Left lung (tissue), 14 donors: ENCODE measurements at regions of chrX and their contacts with region 1.

Region 1: GRCh38 chrX:110146521-110146920 is 143.6 kb downstream of the TMEM164 start:
- DNase-seq: peak in 2 of 4 donors; percentile 28 to 55
- ATAC-seq: peak; percentile 82
- H3K4me3 ChIP-seq: no peak overlapping the region
- H3K27ac ChIP-seq: no peak overlapping the region
- H3K4me1 ChIP-seq: peaks cover 0 to 19% of the 10 kb centered on the region in 2 donors
- H3K27me3 ChIP-seq: no peaks in the 10 kb centered on the region
- CTCF ChIP-seq: peak; percentile 60 to 63

Region 2: DNA sequence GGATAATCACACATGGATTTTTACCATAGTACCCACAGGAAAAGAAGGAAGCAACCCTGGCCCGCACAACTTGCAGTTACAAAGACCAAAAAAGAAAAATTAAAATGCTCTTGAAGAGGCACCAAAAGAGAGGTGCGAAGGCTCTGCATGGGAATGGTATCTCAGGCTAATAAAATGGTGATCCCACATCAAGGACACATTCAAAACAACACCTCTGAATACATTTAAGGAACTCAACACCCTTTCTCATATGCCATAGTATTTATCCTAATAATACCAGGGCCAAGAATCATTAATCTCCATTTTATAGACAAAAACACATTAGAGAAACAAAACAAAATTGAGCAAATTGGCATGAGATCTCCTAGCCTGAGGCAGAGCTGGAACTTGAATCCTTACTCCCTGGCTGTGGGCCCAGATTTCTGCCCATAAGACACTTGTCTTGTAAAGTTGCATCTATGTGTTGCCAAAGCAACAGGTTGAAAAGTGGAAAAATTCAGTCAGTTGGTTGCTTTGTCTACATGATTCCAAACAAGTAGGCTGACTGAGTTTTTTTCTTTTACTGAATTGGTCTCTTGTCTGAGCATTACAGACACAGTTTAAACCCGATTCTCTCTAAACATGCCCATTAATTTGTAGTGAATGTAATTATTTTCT is 698.1 kb before region 1 on chrX:
- intact Hi-C with region 1: no loop called
- DNase-seq: peak in 1 of 4 donors; percentile 1
- ATAC-seq: no peak
- H3K4me3 ChIP-seq: no peak overlapping the region
- H3K27ac ChIP-seq: no peak overlapping the region
- H3K4me1 ChIP-seq: no peaks in the 10 kb centered on the region
- H3K27me3 ChIP-seq: peaks cover 0 to 5% of the 10 kb centered on the region in 2 donors
- CTCF ChIP-seq: no peak

Region 3: GRCh38 chrX:109911046-109911445 is 235.5 kb before region 1 on chrX:
- intact Hi-C with region 1: loop called in 1 of 2 experiments (anchors 10 kb)
- DNase-seq: peak in 1 of 4 donors; percentile 5
- ATAC-seq: no peak
- H3K4me3 ChIP-seq: no peak overlapping the region
- H3K27ac ChIP-seq: no peak overlapping the region
- H3K4me1 ChIP-seq: no peaks in the 10 kb centered on the region
- H3K27me3 ChIP-seq: peaks cover 0 to under 1% of the 10 kb centered on the region in 2 donors
- CTCF ChIP-seq: peak in 1 of 2 donors; percentile 38

Region 4: DNA sequence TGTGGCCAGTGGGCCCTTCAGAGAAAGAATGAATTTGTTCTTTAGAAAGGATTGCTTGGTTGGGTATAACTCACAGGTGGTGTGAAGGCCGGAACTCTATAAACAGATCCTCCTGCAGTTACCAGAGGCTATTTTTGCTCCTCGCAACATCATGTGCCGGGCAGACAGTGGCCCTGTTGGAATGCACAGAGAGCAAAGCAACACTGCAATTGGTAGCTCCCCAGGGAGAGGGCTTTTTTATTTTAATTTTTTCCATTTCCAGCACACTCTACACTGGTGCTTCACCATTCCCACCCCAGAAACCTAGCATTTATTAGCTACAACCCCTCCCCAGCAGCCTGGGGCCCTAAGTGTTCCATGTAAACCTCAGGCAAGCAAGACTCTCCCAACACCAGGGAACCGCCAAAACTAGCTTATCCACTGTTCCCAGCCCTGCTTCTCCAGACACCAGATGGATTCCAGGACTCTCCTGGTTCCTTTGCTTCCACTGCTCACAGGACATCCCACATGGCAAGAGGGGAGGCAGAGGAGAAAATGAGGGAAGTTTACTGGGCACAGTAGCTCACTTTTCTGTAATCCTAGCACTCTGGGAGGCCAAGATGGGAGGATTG is 218.8 kb before region 1 on chrX:
- intact Hi-C with region 1: no loop called
- DNase-seq: no peak
- ATAC-seq: no peak
- H3K4me3 ChIP-seq: no peak overlapping the region
- H3K27ac ChIP-seq: no peak overlapping the region
- H3K4me1 ChIP-seq: no peaks in the 10 kb centered on the region
- H3K27me3 ChIP-seq: no peaks in the 10 kb centered on the region
- CTCF ChIP-seq: no peak